Right ventricle myocardium inferior (tissue), 1 donor: ENCODE measurements at regions of chr1 and their contacts with region 1.

Region 1: DNA sequence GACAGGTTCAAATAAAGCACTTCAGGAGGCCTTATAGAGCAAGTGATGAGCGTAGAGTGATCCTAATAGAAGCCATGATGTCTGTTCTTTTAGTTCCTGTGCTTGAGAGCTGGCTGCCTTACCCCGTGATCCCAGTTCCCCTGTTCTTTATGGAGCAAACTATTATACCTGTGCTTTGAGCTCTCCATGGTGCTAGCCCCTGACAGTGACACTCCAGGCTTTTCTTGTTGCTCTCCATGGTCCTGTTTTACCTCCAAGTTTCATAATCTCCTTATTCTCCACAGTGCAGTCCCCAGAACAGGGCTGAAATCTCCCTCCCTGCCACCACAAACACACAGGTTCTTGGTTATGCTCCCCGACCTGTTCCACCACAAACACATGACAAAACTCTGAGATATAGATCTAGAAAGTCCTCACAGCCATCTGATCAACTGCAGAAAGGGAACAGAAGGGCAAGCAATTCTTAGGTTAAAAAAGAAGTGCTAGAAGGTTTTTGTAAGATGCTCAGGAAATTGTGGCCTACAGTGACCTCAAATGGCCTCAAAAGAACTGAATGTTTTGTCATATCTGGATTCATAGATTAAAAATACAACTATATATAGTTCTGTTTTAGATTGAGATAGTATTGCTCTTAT is 6.0 kb downstream of the CADM3 start:
- DNase-seq: no peak
- ATAC-seq: peak; percentile 46

Region 2: DNA sequence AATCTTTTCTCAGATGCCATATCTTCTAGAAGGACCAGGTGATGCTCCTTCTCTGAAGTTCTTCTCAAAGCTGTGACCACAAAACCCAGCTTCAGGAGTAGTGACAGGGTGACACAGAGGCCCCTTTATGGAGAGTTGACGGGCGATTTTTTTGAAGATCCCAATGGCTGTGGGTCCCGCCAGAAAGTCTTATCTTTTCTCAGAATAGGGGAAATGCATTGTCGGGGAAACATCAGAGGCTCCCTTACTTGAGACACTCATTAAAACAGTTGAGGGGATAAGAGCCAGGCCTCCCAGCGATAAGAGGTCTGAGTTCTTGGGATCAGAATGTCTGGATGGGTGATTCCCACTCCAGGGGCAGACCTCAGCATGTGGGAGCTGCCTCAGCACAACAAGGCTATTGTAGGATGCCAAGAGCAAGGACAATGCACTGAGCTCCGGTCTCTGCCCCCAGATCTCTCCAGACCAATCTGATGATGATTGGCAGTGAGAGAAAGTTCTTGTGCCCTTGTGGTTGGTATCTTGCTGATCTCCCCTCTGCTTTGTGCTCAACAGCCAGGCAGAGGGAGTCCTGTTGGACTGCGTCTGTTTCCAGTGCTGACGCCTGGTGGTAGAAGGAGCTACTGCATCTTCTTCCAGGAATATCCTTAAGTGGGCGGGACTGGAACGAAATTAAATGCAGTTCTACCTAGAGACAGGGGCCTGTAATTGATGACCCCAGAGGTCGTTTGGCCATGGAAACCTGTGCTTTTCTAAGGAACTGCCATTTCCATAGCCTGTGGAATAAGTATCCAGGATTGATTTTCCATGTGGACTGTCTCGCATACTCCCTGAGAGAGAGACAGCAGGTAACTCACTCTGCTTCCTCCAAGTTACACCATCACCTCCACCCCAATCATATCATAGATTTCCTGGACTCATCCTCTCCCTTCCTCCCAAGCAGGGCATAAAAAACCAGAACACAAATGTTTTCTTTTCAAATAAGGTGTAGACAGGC is 20.5 kb after region 1 on chr1:
- intact Hi-C with region 1: loop called (anchors 1 kb)
- DNase-seq: no peak
- ATAC-seq: peak; percentile 64

Region 3: DNA sequence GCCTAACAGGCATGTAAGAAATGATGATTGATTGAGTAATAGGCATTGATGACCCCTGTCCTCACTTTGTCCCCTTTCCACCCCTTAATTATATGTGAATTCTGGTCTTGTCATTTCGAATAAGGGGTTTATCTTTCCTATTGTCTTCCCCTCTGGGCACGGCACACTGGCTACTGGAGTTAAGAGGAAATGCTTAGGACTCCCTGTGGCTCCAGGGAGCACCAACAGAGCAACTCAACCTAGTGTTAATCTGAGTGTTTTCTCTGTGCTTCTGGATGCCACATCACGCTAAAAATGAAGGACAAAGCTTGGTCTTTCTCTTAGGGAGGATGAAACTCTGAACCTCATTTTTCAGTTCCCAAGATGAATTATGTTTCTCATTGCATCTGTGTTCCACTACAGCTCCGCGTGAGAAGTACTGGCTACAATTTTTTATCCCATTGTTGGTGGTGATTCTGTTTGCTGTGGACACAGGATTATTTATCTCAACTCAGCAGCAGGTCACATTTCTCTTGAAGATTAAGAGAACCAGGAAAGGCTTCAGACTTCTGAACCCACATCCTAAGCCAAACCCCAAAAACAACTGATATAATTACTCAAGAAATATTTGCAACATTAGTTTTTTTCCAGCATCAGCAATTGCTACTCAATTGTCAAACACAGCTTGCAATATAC is 130.1 kb after region 1 on chr1:
- intact Hi-C with region 1: no loop called
- DNase-seq: no peak
- ATAC-seq: no peak

Region 4: GRCh38 chr1:159587461-159587951 is 410.1 kb after region 1 on chr1 and contains the start of gene APCS:
- intact Hi-C with region 1: no loop called
- DNase-seq: no peak
- ATAC-seq: no peak
- total RNA-seq, gene APCS: not detected